ENCODE measurements at regions of chr19 and their contacts with region 1.

Region 1: GRCh38 chr19:46489445-46490272 is 6.0 kb downstream of the PNMA8B start:
- DNase-seq: no peak
- ATAC-seq: peak; percentile 71

Region 2: GRCh38 chr19:46404055-46404752 is 85.5 kb before region 1 on chr19:
- intact Hi-C with region 1: loop called (anchors 5 kb)
- DNase-seq: peak; percentile 77
- ATAC-seq: peak; percentile 79

Region 3: GRCh38 chr19:46513461-46514236 is 24.0 kb after region 1 on chr19:
- intact Hi-C with region 1: no loop called
- DNase-seq: peak; percentile 93
- ATAC-seq: peak; percentile 96

Region 4: DNA sequence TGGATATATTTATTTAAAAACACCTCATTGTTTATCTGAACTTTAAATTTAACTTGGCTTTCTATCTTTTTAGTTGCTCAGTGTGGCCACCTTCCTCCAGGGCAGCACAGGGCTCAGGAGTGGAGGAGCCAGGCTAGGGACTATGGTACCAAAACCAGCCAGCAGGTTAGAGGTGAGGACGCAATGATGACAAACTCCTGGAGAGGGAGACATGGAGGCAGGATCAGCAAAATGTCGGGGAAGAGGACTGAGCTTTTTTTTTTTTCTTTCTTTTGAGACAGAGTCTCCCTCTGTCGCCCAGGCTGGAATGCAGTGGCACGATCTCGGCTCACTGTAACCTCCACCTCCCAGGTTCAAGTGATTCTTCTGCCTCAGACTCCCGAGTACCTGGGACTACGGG is 81.9 kb after region 1 on chr19:
- intact Hi-C with region 1: no loop called
- DNase-seq: no peak
- ATAC-seq: no peak

Measured in sciatic nerve (tissue), 2 donors.